ENCODE measurements at regions of chr1 and their contacts with region 1.

Region 1: DNA sequence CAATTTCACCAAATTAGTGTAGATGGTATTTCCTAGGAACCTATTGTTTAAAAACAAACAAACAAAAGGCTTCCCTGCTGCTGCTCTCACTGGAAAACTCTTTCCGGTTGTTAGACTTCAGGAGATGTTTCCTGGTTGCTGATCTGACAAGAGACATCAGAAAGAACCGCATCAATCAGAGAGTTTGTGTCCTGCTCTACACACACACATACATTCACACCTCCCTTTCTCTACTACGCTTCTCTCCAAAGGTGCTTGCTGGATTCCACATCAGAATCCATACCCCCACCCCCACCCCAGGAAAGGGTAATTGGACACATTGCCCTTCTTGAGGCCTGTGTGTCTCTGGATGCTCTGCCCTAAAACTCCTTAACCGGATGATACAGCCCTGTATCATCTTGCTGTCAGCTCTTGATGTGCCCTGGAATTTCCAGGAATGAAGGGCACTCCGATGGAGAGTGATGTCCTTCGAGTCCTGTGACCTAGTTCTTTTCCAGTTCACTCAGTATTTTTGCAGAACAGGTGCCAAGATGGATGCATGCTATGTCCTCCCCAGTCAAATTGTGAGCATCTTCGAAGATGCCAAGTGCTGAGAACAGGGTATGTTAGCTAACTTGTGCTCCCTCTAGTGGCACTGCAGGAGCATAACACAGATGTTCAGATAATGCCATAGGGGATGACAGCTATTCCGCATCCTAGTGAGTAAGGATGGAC is 113.7 kb upstream of the SLC35F3 start:
- DNase-seq: peak; percentile 26 to 31
- H3K4me3 ChIP-seq: no peak overlapping the region
- H3K27ac ChIP-seq: no peak overlapping the region
- H3K4me1 ChIP-seq: no peaks in the 10 kb centered on the region
- H3K27me3 ChIP-seq: no peaks in the 10 kb centered on the region
- CTCF ChIP-seq: peak; percentile 85 to 89 (median 88)
- POLR2A ChIP-seq: no peak

Region 2: GRCh38 chr1:233440951-233441401 is 349.8 kb before region 1 on chr1:
- intact Hi-C with region 1: loop called (anchors 10 kb)
- DNase-seq: no peak
- H3K4me3 ChIP-seq: no peak overlapping the region
- H3K27ac ChIP-seq: peak overlapping the region; percentile 2 to 38
- H3K4me1 ChIP-seq: no peaks in the 10 kb centered on the region
- H3K27me3 ChIP-seq: no peaks in the 10 kb centered on the region
- CTCF ChIP-seq: peak; percentile 61 to 65 (median 62)
- POLR2A ChIP-seq: no peak

Measured in uterus (tissue), 4 donors.